ENCODE measurements at regions of chr3 and their contacts with region 1.

Region 1: DNA sequence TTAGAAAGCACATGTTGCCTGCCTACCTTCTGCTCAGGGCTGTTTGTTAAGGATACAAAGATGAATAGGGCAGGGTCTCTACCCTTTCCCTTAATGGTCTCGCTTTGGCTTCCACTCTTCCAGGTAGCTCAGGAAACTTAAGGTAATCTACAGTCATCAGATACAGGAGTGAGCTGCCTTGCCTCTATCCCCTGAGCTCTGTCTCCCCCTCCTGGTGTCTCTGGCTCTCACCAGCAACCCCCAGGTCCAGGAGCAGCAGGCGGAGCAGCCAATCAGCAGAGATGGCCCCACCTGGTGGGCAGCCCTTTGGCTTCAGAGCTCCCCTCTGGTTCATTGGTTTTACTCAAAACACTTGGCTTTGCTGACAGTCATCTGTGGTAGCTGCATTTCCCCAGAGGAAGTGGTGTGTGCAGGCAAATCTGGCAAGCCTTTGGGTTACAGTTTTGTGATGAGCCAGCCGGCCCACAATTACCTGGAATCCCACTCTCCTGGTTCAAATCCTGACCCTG is 8.5 kb upstream of the CX3CR1 start:
- DNase-seq: peak; percentile 90
- H3K4me3 Mint-ChIP-seq: no peak overlapping the region
- H3K27ac Mint-ChIP-seq: peak overlapping the region; percentile 22
- H3K4me1 Mint-ChIP-seq: peaks cover 61% of the 10 kb centered on the region
- H3K27me3 Mint-ChIP-seq: no peaks in the 10 kb centered on the region

Region 2: GRCh38 chr3:39079530-39079929 is 208.8 kb before region 1 on chr3:
- CTCF ChIA-PET with region 1: interaction called, 12 read pairs
- POLR2A ChIA-PET with region 1: no interaction called
- DNase-seq: no peak
- H3K4me3 Mint-ChIP-seq: no peak overlapping the region
- H3K27ac Mint-ChIP-seq: no peak overlapping the region
- H3K4me1 Mint-ChIP-seq: peaks cover 52% of the 10 kb centered on the region
- H3K27me3 Mint-ChIP-seq: no peaks in the 10 kb centered on the region

Region 3: DNA sequence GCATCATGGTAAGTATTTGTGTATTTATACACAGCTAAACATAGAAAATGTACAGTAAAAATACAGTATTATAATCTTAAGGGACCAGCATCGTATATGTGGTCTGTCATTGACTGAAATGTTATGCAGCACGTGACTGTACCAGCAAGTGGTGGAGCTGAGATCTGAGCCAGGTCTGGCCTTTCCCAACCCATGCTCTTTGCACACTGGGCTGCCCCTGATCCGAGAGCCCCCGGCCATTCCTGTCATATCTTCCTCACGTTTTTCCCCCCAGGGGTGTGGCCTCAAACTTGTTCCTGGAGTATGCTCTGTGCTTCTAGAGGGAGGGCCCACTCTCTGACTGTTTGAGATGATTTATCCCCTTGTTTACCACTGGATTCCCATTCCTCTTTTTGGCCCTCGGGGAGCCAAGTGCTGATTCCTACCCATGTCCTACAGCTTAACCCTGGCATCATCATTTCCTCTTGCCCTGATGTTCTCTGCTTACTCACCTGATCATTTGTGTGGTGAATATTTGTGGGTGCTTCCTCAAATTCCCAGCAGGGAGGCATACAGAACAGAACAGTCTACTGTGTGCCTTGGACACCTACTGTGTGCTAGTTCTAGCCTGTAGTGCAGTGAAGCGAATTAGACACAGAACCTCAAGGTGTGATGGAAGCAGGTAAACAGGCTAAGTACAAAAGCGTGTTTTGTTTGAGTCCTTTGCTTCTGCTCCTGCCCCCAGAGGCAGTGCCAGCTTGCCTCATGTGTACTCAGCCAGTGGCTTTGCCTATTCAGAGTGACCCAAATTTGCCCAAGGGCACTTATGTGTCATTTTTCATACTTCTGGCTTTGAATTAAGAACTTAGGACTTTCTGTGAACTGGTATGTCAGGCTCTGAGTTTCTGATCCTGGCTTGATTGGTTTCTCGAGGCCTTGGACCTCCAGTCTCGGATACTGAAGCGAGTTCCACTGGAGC is 155.9 kb before region 1 on chr3:
- CTCF ChIA-PET with region 1: interaction called, 96 read pairs
- POLR2A ChIA-PET with region 1: interaction called, 4 read pairs
- DNase-seq: no peak
- H3K4me3 Mint-ChIP-seq: no peak overlapping the region
- H3K27ac Mint-ChIP-seq: no peak overlapping the region
- H3K4me1 Mint-ChIP-seq: peaks cover 13% of the 10 kb centered on the region
- H3K27me3 Mint-ChIP-seq: no peaks in the 10 kb centered on the region

Region 4: GRCh38 chr3:39180546-39181346 is 107.6 kb before region 1 on chr3:
- CTCF ChIA-PET with region 1: interaction called, 633 read pairs
- POLR2A ChIA-PET with region 1: interaction called, 4 read pairs
- DNase-seq: peak; percentile 94
- H3K4me3 Mint-ChIP-seq: peak overlapping the region; percentile 79
- H3K27ac Mint-ChIP-seq: peak overlapping the region; percentile 63
- H3K4me1 Mint-ChIP-seq: peaks cover 50% of the 10 kb centered on the region
- H3K27me3 Mint-ChIP-seq: no peaks in the 10 kb centered on the region

Region 5: GRCh38 chr3:39216176-39216790 is 72.1 kb before region 1 on chr3:
- CTCF ChIA-PET with region 1: interaction called, 76 read pairs
- POLR2A ChIA-PET with region 1: no interaction called
- DNase-seq: no peak
- H3K4me3 Mint-ChIP-seq: no peak overlapping the region
- H3K27ac Mint-ChIP-seq: peak overlapping the region; percentile 12
- H3K4me1 Mint-ChIP-seq: peaks cover 51% of the 10 kb centered on the region
- H3K27me3 Mint-ChIP-seq: peaks cover 37% of the 10 kb centered on the region

Region 6: DNA sequence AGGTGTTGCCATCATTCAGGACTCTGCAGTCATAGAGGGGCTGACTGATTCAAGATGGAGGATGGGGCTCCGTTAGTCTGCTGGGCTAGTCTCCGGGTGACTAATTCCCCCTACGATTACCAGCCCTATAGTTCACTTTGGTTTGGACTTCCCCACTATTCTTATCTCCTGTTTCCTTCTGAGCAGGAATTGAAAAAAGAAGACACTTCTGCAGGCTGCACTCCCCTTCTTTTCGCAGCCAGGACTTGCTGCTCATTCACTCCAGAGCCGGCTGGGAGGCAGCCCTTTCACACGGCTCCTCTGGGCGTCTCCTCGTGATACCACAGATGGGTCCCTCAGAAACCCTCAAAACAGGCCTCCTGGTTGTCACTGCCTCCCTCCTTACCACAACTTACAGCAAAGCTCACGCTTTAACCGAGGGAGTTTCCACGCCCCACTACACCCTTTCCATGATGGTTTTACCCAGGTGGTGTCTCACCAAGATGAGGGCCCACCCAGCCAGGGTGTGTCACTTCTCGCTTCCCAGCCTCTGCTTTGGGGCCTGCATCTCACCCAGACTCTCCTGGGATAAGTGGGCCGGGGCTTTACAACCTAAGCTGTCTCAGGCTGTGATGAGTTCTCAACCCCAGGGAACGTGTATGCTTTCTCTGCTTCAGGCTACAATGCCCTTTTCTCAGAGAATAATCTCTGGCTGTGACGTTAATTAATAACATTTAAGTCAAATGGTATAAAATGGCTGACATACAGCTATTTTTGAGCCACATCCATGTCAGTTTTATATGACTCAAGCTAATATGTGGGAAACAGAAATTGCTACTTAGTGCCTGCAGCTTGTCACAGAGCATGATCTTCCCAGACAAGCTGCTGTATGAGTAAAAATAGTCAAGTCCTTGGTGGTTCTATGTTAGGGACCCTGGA is 20.5 kb before region 1 on chr3:
- CTCF ChIA-PET with region 1: interaction called, 230 read pairs
- POLR2A ChIA-PET with region 1: interaction called, 7 read pairs
- DNase-seq: peak; percentile 83
- H3K4me3 Mint-ChIP-seq: peak overlapping the region; percentile 38
- H3K27ac Mint-ChIP-seq: peak overlapping the region; percentile 95
- H3K4me1 Mint-ChIP-seq: peaks cover 47% of the 10 kb centered on the region
- H3K27me3 Mint-ChIP-seq: peaks cover 11% of the 10 kb centered on the region

Region 7: GRCh38 chr3:39378088-39378487 is 89.7 kb after region 1 on chr3:
- CTCF ChIA-PET with region 1: interaction called, 217 read pairs
- POLR2A ChIA-PET with region 1: interaction called, 6 read pairs
- DNase-seq: peak; percentile 73
- H3K4me3 Mint-ChIP-seq: no peak overlapping the region
- H3K27ac Mint-ChIP-seq: no peak overlapping the region
- H3K4me1 Mint-ChIP-seq: peaks cover 25% of the 10 kb centered on the region
- H3K27me3 Mint-ChIP-seq: no peaks in the 10 kb centered on the region

Region 8: GRCh38 chr3:40179016-40179415 is 890.7 kb after region 1 on chr3:
- CTCF ChIA-PET with region 1: no interaction called
- POLR2A ChIA-PET with region 1: no interaction called
- DNase-seq: peak; percentile 58
- H3K4me3 Mint-ChIP-seq: no peak overlapping the region
- H3K27ac Mint-ChIP-seq: no peak overlapping the region
- H3K4me1 Mint-ChIP-seq: no peaks in the 10 kb centered on the region
- H3K27me3 Mint-ChIP-seq: no peaks in the 10 kb centered on the region

Measured in activated CD4-positive, alpha-beta memory T cell treated with anti-CD3 and anti-CD28 coated beads, Interleukin-2, amount 10 ng/mL, durations not matched to agents 7 days and 5 days (primary cell).